Left lung (tissue), 14 donors: ENCODE measurements at regions of chr9 and their contacts with region 1.

Region 1: DNA sequence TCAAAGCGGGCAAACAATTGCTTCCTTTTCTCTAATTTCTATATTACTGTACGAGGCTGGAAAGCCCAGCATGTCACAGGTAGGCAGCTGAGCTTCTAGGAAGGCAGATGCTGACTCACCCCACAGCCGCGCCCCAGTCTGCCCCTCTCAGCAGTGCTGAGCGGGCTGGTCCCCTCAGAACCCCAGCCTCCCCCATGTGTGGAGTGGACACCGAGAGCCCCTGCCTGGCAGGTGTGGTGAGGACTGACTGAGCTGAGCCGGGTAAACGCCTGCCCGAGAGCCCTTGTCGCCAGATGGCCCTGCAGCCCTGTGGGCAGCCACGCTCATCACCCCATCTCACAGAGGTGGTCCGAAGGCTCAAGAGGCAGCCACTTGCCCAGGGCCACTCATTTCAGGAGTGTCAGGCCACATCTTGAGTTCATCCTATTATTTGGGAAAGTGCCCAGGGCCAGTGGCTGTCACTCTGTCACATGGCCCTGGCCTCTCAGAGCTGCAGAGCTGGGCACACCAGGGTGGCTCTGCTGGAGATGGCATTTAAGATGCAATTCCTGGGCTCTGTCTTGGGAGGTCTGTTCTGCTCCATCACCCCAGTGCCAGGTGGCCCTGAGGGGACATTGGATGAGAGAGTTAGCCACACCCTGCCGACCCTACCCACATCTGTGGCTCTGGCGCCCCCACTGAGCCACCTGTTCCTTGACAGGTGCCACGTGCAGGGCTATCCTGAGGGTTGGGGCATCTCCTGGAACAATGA is 12.4 kb downstream of the CARD19 start:
- DNase-seq: peak in 2 of 4 donors; percentile 36 to 80
- ATAC-seq: no peak
- H3K4me3 ChIP-seq: no peak overlapping the region
- H3K27ac ChIP-seq: peak overlapping the region in 1 of 2 donors; percentile 90
- H3K4me1 ChIP-seq: peaks cover 0 to 66% of the 10 kb centered on the region in 2 donors
- H3K27me3 ChIP-seq: no peaks in the 10 kb centered on the region
- CTCF ChIP-seq: no peak

Region 2: DNA sequence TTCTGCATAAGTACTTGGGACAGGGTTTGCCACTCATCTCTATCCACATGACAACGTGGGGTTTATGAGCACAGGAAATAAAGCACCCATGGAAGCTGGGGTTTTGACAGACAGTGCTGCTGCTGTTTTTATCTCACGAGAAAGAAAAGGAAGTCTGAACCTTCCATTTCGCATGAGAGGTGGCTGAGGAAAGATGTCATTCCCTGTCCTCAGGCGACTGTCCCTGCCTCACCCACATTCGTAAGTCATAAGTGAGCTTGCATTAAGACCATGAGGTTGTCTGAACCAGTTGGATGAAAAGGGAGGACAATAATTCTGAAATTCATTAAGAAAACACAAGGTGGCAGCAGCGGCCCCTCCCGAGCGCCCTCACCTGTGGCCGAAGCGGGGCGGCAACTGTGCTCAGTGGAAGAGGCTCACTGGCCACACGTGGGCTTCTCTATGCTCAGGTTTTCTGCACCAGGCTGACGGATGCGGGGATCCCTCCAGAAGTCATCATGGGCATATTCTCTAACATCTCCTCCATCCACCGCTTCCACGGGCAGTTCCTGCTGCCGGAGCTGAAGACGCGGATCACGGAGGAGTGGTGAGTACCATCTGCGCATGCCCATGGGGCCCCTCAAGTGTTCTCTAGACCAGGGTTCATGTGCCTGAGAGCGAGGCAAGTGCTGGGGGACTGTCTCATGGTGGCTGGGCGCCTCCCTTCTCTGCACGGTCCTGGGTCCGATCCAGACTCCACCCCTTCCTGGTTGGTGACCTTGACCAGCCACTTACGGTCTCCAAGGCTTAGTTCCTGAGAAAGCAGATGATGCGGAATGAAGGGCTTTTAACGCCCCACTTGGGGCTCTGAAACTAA is 104.7 kb before region 1 on chr9:
- intact Hi-C with region 1: loop called in 1 of 2 experiments (anchors 5 kb)
- DNase-seq: peak in 3 of 4 donors; percentile 45 to 88 (median 68)
- ATAC-seq: peak; percentile 94
- H3K4me3 ChIP-seq: peak overlapping the region; percentile 20 to 30
- H3K27ac ChIP-seq: peak overlapping the region in 1 of 2 donors; percentile 50
- H3K4me1 ChIP-seq: peaks cover 0 to 11% of the 10 kb centered on the region in 2 donors
- H3K27me3 ChIP-seq: no peaks in the 10 kb centered on the region
- CTCF ChIP-seq: peak; percentile 51 to 62